MCF 10A (cell line): ENCODE measurements at regions of chr4 and their contacts with region 1.

Region 1: GRCh38 chr4:156594624-156595023 is 377.0 kb downstream of the PDGFC start:
- DNase-seq: peak; percentile 42
- H3K4me3 Mint-ChIP-seq: no peak overlapping the region
- H3K27ac Mint-ChIP-seq: peak overlapping the region; percentile 67
- H3K4me1 Mint-ChIP-seq: peaks cover 11% of the 10 kb centered on the region
- H3K27me3 Mint-ChIP-seq: no peaks in the 10 kb centered on the region
- CTCF ChIP-seq: no peak

Region 2: GRCh38 chr4:157128395-157128794 is 533.8 kb after region 1 on chr4:
- CTCF ChIA-PET with region 1: no interaction called
- POLR2A ChIA-PET with region 1: no interaction called
- intact Hi-C with region 1: loop called (anchors 2 kb)
- DNase-seq: peak; percentile 38
- H3K4me3 Mint-ChIP-seq: no peak overlapping the region
- H3K27ac Mint-ChIP-seq: no peak overlapping the region
- H3K4me1 Mint-ChIP-seq: no peaks in the 10 kb centered on the region
- H3K27me3 Mint-ChIP-seq: no peaks in the 10 kb centered on the region
- CTCF ChIP-seq: peak; percentile 64